ENCODE measurements at regions of chr3 and their contacts with region 1.

Region 1: DNA sequence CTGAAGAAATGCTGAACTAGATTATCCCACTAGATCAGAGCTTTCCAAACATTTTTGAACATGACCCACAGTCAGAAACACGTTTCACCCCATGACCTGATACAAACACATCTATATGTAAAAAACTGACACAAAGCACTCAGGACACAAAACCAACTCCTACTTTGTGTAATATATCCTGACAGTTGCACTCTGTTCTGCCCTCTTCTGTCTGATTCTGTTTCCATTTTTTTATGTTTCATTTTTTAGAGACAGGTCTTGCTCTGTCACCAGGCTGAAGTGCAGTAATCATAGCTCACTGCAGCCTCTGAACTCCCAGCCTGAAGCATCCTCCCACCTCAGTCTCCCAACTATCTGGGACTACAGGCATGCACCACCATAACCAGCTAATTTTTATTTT is 15.8 kb upstream of the RFTN1 start:
- DNase-seq: no peak
- ATAC-seq: peak; percentile 54
- H3K4me3 Mint-ChIP-seq: no peak overlapping the region
- H3K27ac Mint-ChIP-seq: no peak overlapping the region
- H3K4me1 Mint-ChIP-seq: peaks cover 14% of the 10 kb centered on the region
- H3K27me3 Mint-ChIP-seq: no peaks in the 10 kb centered on the region
- CTCF ChIP-seq: no peak

Region 2: GRCh38 chr3:16290007-16290826 is 239.0 kb before region 1 on chr3:
- CTCF ChIA-PET with region 1: interaction called, 18 read pairs
- POLR2A ChIA-PET with region 1: interaction called, 3 read pairs
- intact Hi-C with region 1: loop called (anchors 1 kb)
- DNase-seq: no peak
- ATAC-seq: peak; percentile 49
- H3K4me3 Mint-ChIP-seq: no peak overlapping the region
- H3K27ac Mint-ChIP-seq: no peak overlapping the region
- H3K4me1 Mint-ChIP-seq: peaks cover 36% of the 10 kb centered on the region
- H3K27me3 Mint-ChIP-seq: no peaks in the 10 kb centered on the region
- CTCF ChIP-seq: peak; percentile 51